HepG2 (cell line): ENCODE measurements at regions of chr19 and their contacts with region 1.

Region 1: DNA sequence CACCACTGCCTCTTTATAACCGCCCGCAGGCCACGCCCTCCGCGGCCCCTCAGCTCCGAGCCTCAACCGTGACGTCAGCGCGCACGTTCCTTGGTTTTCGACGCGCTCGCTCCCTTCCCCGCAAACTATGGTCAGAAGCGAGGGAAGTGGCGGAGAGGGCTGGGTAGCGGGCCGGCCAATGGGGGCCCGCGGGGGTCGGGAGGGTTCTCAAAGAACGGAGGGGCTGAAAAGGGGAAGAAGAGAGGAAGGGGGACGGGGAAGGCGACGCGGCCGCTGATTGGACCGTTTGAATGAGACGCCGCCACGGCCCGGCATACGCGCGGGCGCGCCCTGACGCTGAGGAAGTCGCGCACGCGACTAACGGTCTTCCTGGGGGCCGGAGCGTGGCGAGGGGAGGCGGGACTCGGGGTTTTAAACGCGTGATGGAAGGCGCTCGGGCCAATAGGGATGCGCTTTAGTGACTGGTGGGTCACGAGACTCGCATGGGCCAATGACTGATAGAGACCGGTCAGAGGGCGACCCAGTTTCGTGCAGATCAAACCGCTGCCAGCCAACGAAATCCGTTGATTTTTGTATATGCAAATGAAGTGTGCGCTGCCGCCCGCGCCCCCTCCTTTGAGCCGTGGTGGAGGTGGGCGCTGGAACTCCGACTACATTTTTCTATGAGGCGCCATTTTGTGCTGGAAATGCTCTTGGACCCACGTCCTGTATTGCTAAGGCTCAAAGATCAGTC is 378 bp upstream of the UBE2S start:
- DNase-seq: peak; percentile 83
- ATAC-seq: peak; percentile 86
- H3K4me3 ChIP-seq: peak overlapping the region; percentile 82 to 88 (median 83); a peak in 5 of 6 replicates
- H3K27ac ChIP-seq: peak overlapping the region; percentile 68
- H3K4me1 ChIP-seq: peaks cover 26% of the 10 kb centered on the region
- H3K27me3 ChIP-seq: peaks cover 0 to 5% of the 10 kb centered on the region in 2 experiments; a peak in 1 of 5 replicates
- CTCF ChIP-seq: no peak
- EP300 ChIP-seq: no peak
- POLR2A ChIP-seq: no peak
- RAD21 ChIP-seq: 0 out of 2 replicates have a peak, but pooled peaks have one; percentile 1

Region 2: GRCh38 chr19:55206664-55207500 is 201.1 kb before region 1 on chr19:
- CTCF ChIA-PET with region 1: no interaction called
- POLR2A ChIA-PET with region 1: interaction called, 11 read pairs
- in situ Hi-C with region 1: no loop called
- intact Hi-C with region 1: no loop called
- DNase-seq: peak; percentile 93
- ATAC-seq: peak; percentile 89
- H3K4me3 ChIP-seq: peak overlapping the region; percentile 73 to 93 (median 82)
- H3K27ac ChIP-seq: peak overlapping the region; percentile 100
- H3K4me1 ChIP-seq: peaks cover 64% of the 10 kb centered on the region
- H3K27me3 ChIP-seq: no peaks in the 10 kb centered on the region; a peak in 1 of 5 replicates
- CTCF ChIP-seq: no peak
- EP300 ChIP-seq: peak in 1 of 2 experiments; percentile 61; a peak in 2 of 4 replicates
- POLR2A ChIP-seq: peak; percentile 71 to 79
- RAD21 ChIP-seq: 0 out of 2 replicates have a peak, but pooled peaks have one; percentile 20

Region 3: GRCh38 chr19:55258828-55259539 is 149.0 kb before region 1 on chr19 and contains the start of gene PPP6R1:
- CTCF ChIA-PET with region 1: no interaction called
- POLR2A ChIA-PET with region 1: interaction called, 14 read pairs
- in situ Hi-C with region 1: no loop called
- intact Hi-C with region 1: no loop called
- DNase-seq: peak; percentile 97
- ATAC-seq: peak; percentile 86
- H3K4me3 ChIP-seq: peak within 1 kb of the TSS; percentile 88 to 95 (median 94)
- H3K27ac ChIP-seq: peak within 1 kb of the TSS; percentile 86
- H3K4me1 ChIP-seq: peaks cover 44% of the 10 kb centered on the region
- H3K27me3 ChIP-seq: no peaks in the 10 kb centered on the region; a peak in 1 of 5 replicates
- CTCF ChIP-seq: 0 out of 2 replicates have a peak, but pooled peaks have one; percentile 8
- EP300 ChIP-seq: peak; percentile 58 to 89; a peak in 3 of 4 replicates
- POLR2A ChIP-seq: peak; percentile 79 to 86
- RAD21 ChIP-seq: peak; percentile 69
- total RNA-seq, gene PPP6R1: 23.0 and 25.8 TPM in 2 replicates

Region 4: DNA sequence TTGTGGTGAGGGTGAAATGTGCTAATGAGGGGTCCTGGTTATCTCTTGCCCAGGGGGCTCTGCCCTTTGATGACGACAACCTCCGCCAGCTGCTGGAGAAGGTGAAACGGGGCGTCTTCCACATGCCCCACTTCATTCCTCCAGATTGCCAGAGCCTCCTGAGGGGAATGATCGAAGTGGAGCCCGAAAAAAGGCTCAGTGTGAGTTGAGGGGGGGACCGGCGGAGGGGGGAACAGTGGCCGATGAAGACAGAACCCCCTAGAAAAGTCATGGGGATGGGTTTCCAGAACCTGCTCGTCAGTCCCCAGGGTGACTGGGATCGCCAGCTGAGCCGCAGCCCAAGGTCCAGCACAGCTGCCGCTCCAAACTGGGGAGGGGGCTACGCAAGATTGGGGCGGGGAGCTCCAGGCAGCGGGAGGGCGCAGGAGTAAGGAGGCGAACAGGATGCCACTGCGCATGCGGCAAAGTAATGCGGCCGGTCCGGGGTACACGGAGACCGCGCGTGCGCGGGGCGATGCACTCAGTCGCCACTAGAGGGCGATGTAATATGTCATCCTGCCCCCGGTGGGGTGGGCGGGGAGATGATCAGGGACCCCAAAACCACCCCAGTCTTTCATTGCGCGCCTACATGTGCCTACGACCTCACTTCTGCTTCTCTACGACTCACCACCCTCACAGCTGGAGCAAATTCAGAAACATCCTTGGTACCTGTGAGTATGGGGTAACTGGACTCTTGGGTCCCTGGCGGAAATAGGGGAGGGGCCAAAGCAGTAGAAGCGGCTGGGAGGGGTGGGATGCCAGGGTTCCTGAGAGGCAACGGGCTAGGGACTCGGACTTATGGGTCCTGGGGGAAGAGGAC is 106.3 kb before region 1 on chr19:
- CTCF ChIA-PET with region 1: no interaction called
- POLR2A ChIA-PET with region 1: interaction called, 13 read pairs
- in situ Hi-C with region 1: no loop called
- intact Hi-C with region 1: no loop called
- DNase-seq: peak; percentile 68
- ATAC-seq: peak; percentile 75
- H3K4me3 ChIP-seq: peak overlapping the region; percentile 55 to 75 (median 72)
- H3K27ac ChIP-seq: no peak overlapping the region
- H3K4me1 ChIP-seq: peaks cover 29% of the 10 kb centered on the region
- H3K27me3 ChIP-seq: peaks cover 0 to 20% of the 10 kb centered on the region in 2 experiments; a peak in 2 of 5 replicates
- CTCF ChIP-seq: peak; percentile 97
- EP300 ChIP-seq: no peak
- POLR2A ChIP-seq: peak in 1 of 2 experiments; percentile 48; a peak in 1 of 4 replicates
- RAD21 ChIP-seq: peak; percentile 78

Region 5: GRCh38 chr19:55339048-55339888 is 68.7 kb before region 1 on chr19 and contains the start of gene KMT5C:
- CTCF ChIA-PET with region 1: no interaction called
- POLR2A ChIA-PET with region 1: interaction called, 20 read pairs
- in situ Hi-C with region 1: no loop called
- intact Hi-C with region 1: no loop called
- DNase-seq: peak; percentile 100
- ATAC-seq: peak; percentile 91
- H3K4me3 ChIP-seq: peak within 1 kb of the TSS; percentile 82 to 99 (median 91)
- H3K27ac ChIP-seq: peak within 1 kb of the TSS; percentile 86
- H3K4me1 ChIP-seq: peaks cover 31% of the 10 kb centered on the region
- H3K27me3 ChIP-seq: no peaks in the 10 kb centered on the region; a peak in 1 of 5 replicates
- CTCF ChIP-seq: peak; percentile 59
- EP300 ChIP-seq: no peak
- POLR2A ChIP-seq: peak in 1 of 2 experiments; percentile 14; a peak in 2 of 4 replicates
- RAD21 ChIP-seq: peak; percentile 19; the same call in 1 of the 2 replicates
- total RNA-seq, gene KMT5C: 2.1 and 5.5 TPM in 2 replicates

Region 6: DNA sequence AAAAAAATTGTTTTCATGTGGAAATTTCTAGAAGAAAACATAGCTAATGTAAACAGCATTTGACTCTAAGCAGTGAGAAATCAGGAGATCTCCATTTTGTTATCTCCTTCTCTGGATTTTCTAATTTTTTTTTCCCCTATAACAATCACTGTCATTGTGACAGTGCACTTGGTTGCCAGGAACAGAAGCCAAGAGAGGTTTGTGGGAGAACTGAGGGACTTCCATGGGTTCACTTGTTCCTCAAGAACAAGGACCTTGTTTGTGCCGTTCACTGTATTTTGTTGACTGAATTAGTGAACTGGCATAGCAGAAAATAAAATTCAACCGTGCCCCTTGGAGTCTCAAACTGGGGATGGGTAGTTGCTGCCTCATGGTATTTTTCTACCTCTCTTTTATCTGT is 18.1 kb after region 1 on chr19:
- CTCF ChIA-PET with region 1: no interaction called
- POLR2A ChIA-PET with region 1: no interaction called
- in situ Hi-C with region 1: no loop called
- intact Hi-C with region 1: no loop called
- DNase-seq: no peak
- ATAC-seq: no peak
- H3K4me3 ChIP-seq: no peak overlapping the region
- H3K27ac ChIP-seq: no peak overlapping the region
- H3K4me1 ChIP-seq: no peaks in the 10 kb centered on the region
- H3K27me3 ChIP-seq: peaks cover 0 to 15% of the 10 kb centered on the region in 2 experiments; a peak in 1 of 5 replicates
- CTCF ChIP-seq: no peak
- EP300 ChIP-seq: no peak
- POLR2A ChIP-seq: no peak
- RAD21 ChIP-seq: no peak

Region 7: GRCh38 chr19:55452749-55453346 is 44.9 kb after region 1 on chr19:
- CTCF ChIA-PET with region 1: no interaction called
- POLR2A ChIA-PET with region 1: interaction called, 11 read pairs
- in situ Hi-C with region 1: no loop called
- intact Hi-C with region 1: no loop called
- DNase-seq: peak; percentile 44
- ATAC-seq: peak; percentile 35
- H3K4me3 ChIP-seq: no peak overlapping the region
- H3K27ac ChIP-seq: no peak overlapping the region
- H3K4me1 ChIP-seq: peaks cover 14% of the 10 kb centered on the region
- H3K27me3 ChIP-seq: peaks cover 0 to 17% of the 10 kb centered on the region in 2 experiments; a peak in 3 of 5 replicates
- CTCF ChIP-seq: no peak; the same call in 1 of the 2 replicates
- EP300 ChIP-seq: no peak
- POLR2A ChIP-seq: no peak
- RAD21 ChIP-seq: no peak

Region 8: DNA sequence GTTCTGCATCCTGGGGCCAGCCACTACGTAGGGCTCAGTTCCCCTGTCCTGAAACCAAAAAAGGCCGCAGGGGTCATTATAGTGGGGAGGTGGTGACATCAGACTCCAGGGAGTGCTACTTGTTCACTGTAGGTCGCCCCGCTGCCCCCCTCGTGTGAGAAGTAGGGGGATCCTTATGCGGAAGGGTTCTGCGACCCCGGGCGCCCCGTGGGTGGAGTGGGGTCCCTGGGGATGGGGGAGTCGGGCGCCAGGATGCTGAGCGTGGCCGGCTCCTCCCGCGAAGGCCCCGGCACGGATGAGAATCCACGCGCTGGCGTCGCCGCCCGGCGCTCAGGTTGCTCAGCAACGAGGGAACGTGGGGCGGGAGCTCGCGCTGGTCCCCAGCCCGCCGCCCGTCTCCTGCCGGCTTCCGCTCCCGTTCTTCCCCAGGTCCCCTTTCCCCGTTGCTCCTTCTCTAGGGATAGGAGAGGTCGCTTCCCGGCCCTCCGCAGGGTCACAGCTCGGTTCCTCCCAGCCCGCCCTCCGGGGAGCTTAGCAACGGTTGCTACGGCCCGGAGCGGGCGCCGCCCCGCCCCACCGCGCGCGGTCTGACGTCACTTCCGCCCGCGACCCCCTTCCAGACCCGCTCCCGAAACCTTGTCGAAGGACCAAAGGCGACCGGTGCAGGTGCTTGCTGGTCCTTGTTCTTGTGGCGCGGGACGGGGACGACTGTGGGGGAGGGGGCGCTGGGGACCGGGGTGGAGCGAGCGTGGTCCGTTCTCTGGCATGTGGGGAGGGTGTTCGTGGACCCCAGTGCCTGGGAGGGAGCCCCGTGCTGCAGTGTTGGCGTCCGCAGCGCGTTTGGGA is 76.8 kb after region 1 on chr19 and contains the start of gene NAT14:
- CTCF ChIA-PET with region 1: no interaction called
- POLR2A ChIA-PET with region 1: no interaction called
- in situ Hi-C with region 1: no loop called
- intact Hi-C with region 1: no loop called
- DNase-seq: peak; percentile 39
- ATAC-seq: peak; percentile 33
- H3K4me3 ChIP-seq: peak within 1 kb of the TSS; percentile 62 to 79 (median 69)
- H3K27ac ChIP-seq: peak within 1 kb of the TSS; percentile 33
- H3K4me1 ChIP-seq: peaks cover 33% of the 10 kb centered on the region
- H3K27me3 ChIP-seq: peaks cover 3 to 5% of the 10 kb centered on the region in 2 experiments; a peak in 3 of 5 replicates
- CTCF ChIP-seq: no peak; the same call in 1 of the 2 replicates
- EP300 ChIP-seq: no peak
- POLR2A ChIP-seq: peak in 1 of 2 experiments; percentile 57; a peak in 2 of 4 replicates
- RAD21 ChIP-seq: 0 out of 2 replicates have a peak, but pooled peaks have one; percentile 8
- total RNA-seq, gene NAT14: 14.7 and 22.3 TPM in 2 replicates